Left ventricle myocardium superior (tissue), 1 donor: ENCODE measurements at regions of chr3 and their contacts with region 1.

Region 1: GRCh38 chr3:35785234-35785888 is 146.0 kb downstream of the ARPP21 start:
- DNase-seq: no peak
- ATAC-seq: no peak

Region 2: DNA sequence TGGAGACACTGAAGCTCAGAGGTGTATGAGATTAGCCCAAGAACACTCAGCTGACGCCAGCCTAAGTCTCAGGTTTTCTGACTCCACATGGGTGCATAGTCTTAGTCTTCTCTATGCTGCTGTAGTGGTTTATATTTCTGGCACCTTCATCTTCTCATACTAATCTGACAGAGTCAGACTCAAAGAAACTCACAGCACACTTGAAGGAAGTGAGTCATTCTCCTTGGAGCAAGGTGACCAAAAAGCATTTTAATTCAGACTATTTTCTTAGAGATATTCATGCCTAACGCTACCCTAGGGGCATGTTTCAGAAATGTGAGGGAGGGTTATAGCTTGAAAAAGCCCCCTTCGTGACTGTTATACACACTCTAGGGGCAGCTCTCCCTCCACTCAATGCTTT is 921.4 kb before region 1 on chr3:
- intact Hi-C with region 1: loop called (anchors 5 kb)
- DNase-seq: no peak
- ATAC-seq: no peak